MCF 10A (cell line): ENCODE measurements at regions of chr2 and their contacts with region 1.

Region 1: GRCh38 chr2:65033178-65033577 is 23.0 kb upstream of the CEP68 start:
- DNase-seq: peak; percentile 22
- H3K4me3 Mint-ChIP-seq: no peak overlapping the region
- H3K27ac Mint-ChIP-seq: no peak overlapping the region
- H3K4me1 Mint-ChIP-seq: peaks cover 13% of the 10 kb centered on the region
- H3K27me3 Mint-ChIP-seq: no peaks in the 10 kb centered on the region
- CTCF ChIP-seq: peak; percentile 24

Region 2: GRCh38 chr2:64567473-64567872 is 465.7 kb before region 1 on chr2:
- CTCF ChIA-PET with region 1: interaction called, 10 read pairs
- POLR2A ChIA-PET with region 1: no interaction called
- intact Hi-C with region 1: no loop called
- DNase-seq: no peak
- H3K4me3 Mint-ChIP-seq: no peak overlapping the region
- H3K27ac Mint-ChIP-seq: no peak overlapping the region
- H3K4me1 Mint-ChIP-seq: peaks cover 9% of the 10 kb centered on the region
- H3K27me3 Mint-ChIP-seq: no peaks in the 10 kb centered on the region
- CTCF ChIP-seq: no peak

Region 3: DNA sequence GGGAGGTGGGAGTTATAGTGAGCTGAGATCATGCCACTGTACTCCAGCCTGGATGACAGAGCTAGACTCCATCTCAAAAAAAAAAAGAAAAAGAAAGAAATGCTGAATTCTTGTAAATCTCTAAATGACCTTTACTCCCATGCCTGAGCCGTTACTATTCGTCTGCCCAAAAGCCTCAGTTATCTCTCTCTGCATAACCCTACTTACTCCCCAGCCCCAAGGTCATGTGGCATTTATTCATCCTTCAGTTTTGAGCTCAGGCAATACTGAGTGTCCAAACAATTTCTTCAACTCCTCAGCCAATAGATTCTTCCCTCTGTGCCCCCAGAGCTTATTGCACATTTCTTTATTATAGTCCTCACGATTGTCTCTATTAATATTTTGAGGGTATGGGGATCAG is 67.9 kb after region 1 on chr2:
- CTCF ChIA-PET with region 1: no interaction called
- POLR2A ChIA-PET with region 1: no interaction called
- intact Hi-C with region 1: no loop called
- DNase-seq: no peak
- H3K4me3 Mint-ChIP-seq: no peak overlapping the region
- H3K27ac Mint-ChIP-seq: no peak overlapping the region
- H3K4me1 Mint-ChIP-seq: no peaks in the 10 kb centered on the region
- H3K27me3 Mint-ChIP-seq: no peaks in the 10 kb centered on the region
- CTCF ChIP-seq: no peak